ENCODE measurements at regions of chr12 and their contacts with region 1.

Region 1: GRCh38 chr12:40034712-40035111 is 71.2 kb downstream of the SLC2A13 start:
- DNase-seq: no peak
- H3K4me3 ChIP-seq: no peak overlapping the region
- H3K4me3 Mint-ChIP-seq: no peak overlapping the region
- H3K27ac ChIP-seq: no peak overlapping the region
- H3K27ac Mint-ChIP-seq: peak overlapping the region in 1 of 8 donors; percentile 74
- H3K4me1 ChIP-seq: no peaks in the 10 kb centered on the region
- H3K4me1 Mint-ChIP-seq: no peaks in the 10 kb centered on the region
- H3K27me3 ChIP-seq: no peaks in the 10 kb centered on the region
- H3K27me3 Mint-ChIP-seq: no peaks in the 10 kb centered on the region

Region 2: DNA sequence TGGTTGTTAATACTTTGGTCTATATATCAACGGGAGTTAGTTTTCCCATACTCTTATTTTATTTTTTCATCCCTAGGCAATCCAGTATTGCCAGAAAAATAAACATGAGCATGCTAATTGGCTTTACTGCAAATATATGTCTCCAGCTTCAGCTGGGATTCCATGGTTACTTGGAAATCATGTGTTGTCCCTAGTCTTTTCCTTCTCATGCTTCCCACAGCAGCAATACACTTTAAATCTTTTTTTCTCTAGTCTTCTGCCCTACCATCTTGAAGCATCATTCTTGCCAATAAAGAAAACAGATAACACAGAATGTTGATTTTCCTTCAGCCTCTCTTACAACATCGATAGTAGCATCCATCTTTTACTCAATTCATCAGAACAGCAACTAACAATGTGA is 10.9 kb after region 1 on chr12:
- CTCF ChIA-PET with region 1: no interaction called
- POLR2A ChIA-PET with region 1: interaction called, 15 read pairs
- DNase-seq: no peak
- H3K4me3 ChIP-seq: no peak overlapping the region
- H3K4me3 Mint-ChIP-seq: no peak overlapping the region
- H3K27ac ChIP-seq: no peak overlapping the region
- H3K27ac Mint-ChIP-seq: peak overlapping the region in 1 of 8 donors; percentile 58
- H3K4me1 ChIP-seq: no peaks in the 10 kb centered on the region
- H3K4me1 Mint-ChIP-seq: no peaks in the 10 kb centered on the region
- H3K27me3 ChIP-seq: no peaks in the 10 kb centered on the region
- H3K27me3 Mint-ChIP-seq: no peaks in the 10 kb centered on the region

Measured in CD8-positive, alpha-beta memory T cell (primary cell).